Caco-2 (cell line): ENCODE measurements at regions of chr17 and their contacts with region 1.

Region 1: GRCh38 chr17:17079751-17080150 is 37.5 kb downstream of the MPRIP start:
- DNase-seq: no peak
- H3K4me3 ChIP-seq: no peak overlapping the region
- H3K4me3 Mint-ChIP-seq: no peak overlapping the region
- H3K27ac Mint-ChIP-seq: peak overlapping the region; percentile 74
- H3K4me1 ChIP-seq: peaks cover 40% of the 10 kb centered on the region
- H3K4me1 Mint-ChIP-seq: peaks cover 48% of the 10 kb centered on the region
- H3K27me3 ChIP-seq: no peaks in the 10 kb centered on the region
- H3K27me3 Mint-ChIP-seq: no peaks in the 10 kb centered on the region
- CTCF ChIP-seq: no peak

Region 2: DNA sequence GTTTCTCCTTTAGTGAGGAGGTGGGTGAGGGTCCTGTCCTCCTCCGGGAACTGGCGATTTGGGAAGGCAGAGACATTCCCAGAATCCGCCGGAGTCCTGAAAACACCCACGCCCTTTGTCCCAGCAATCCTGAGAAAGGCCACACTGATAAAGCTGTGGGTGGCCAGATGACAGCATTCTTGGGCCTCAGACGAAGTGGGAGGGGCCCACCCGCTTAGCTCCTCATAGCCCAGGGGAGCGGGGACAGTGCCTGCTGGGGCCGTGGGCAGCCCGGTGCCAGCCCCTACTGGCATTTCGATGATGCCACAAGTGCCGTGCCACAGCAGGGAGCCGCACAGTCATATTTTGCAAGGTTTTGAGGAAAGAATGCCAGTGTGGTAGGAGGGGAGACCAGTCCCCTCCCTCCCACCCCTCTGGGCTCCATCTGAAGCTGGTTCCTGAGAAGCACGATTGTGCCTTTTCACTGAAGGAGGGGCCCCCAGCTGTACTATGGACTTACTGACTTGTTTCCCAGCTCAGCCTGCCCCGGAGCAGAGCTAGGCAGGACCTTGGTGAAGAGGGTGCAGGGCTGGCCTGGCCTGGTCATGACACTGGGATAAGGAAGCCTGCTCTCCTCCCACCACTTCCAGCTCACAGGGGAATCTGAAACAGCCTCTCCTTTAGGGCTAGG is 58.4 kb before region 1 on chr17:
- CTCF ChIA-PET with region 1: no interaction called
- POLR2A ChIA-PET with region 1: interaction called, 6 read pairs
- intact Hi-C with region 1: loop called (anchors 1 kb)
- DNase-seq: peak; percentile 85 to 94
- H3K4me3 ChIP-seq: no peak overlapping the region; the same call in 1 of the 2 replicates
- H3K4me3 Mint-ChIP-seq: peak overlapping the region; percentile 51
- H3K27ac Mint-ChIP-seq: peak overlapping the region; percentile 94
- H3K4me1 ChIP-seq: peaks cover 57% of the 10 kb centered on the region
- H3K4me1 Mint-ChIP-seq: peaks cover 60% of the 10 kb centered on the region
- H3K27me3 ChIP-seq: no peaks in the 10 kb centered on the region
- H3K27me3 Mint-ChIP-seq: no peaks in the 10 kb centered on the region
- CTCF ChIP-seq: no peak

Region 3: DNA sequence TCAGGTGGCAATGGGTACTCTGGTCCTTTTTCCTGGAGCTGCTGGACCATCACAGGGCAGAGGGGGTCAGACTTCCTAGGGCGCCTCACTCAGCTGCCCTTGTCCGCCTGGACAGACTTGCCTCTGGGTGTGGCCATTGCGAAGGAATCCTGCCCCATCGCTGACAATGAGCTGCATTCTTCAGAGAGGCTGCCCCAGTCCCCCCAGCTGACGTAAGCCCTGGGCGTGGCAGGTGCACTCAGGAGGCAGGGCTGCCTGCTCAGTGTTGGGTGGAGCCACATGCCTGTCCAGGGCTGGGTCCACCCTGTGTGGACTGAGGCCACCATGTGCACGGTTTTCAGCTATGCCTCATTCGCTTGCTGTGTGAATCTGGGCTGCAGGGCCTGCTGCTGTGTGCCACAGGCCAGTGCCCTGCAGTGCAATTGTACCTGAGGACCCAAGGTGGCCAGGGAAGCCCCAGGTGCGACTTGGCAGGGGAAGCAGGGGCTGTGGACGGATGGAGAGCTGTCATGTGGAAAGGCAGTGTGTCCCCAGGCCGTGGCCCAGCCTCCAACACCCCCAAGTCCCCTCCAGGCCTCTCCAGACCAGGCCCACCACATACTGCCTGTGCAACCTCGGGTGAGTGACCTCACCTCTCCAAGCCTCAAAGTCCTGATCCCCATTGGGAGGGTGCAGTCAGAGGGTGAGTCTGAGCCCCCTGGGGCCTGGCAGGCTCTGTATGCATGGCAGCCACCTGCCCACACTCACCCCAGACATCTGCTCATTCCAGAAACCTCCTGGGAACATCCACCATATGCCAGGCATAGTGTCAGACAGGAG is 51.5 kb before region 1 on chr17:
- CTCF ChIA-PET with region 1: interaction called, 13 read pairs
- POLR2A ChIA-PET with region 1: interaction called, 6 read pairs
- intact Hi-C with region 1: loop called (anchors 1 kb)
- DNase-seq: peak; percentile 99 to 100
- H3K4me3 ChIP-seq: peak overlapping the region; percentile 24
- H3K4me3 Mint-ChIP-seq: peak overlapping the region; percentile 69
- H3K27ac Mint-ChIP-seq: peak overlapping the region; percentile 99
- H3K4me1 ChIP-seq: peaks cover 49% of the 10 kb centered on the region
- H3K4me1 Mint-ChIP-seq: peaks cover 53% of the 10 kb centered on the region
- H3K27me3 ChIP-seq: no peaks in the 10 kb centered on the region
- H3K27me3 Mint-ChIP-seq: no peaks in the 10 kb centered on the region
- CTCF ChIP-seq: peak in 1 of 2 experiments; percentile 46

Region 4: GRCh38 chr17:17055286-17056155 is 24.2 kb before region 1 on chr17:
- CTCF ChIA-PET with region 1: no interaction called
- POLR2A ChIA-PET with region 1: no interaction called
- intact Hi-C with region 1: loop called (anchors 1 kb)
- DNase-seq: peak in 1 of 2 experiments; percentile 30
- H3K4me3 ChIP-seq: no peak overlapping the region
- H3K4me3 Mint-ChIP-seq: no peak overlapping the region
- H3K27ac Mint-ChIP-seq: no peak overlapping the region
- H3K4me1 ChIP-seq: peaks cover 16% of the 10 kb centered on the region; the same call in 1 of the 2 replicates
- H3K4me1 Mint-ChIP-seq: peaks cover 15% of the 10 kb centered on the region
- H3K27me3 ChIP-seq: no peaks in the 10 kb centered on the region
- H3K27me3 Mint-ChIP-seq: no peaks in the 10 kb centered on the region
- CTCF ChIP-seq: peak in 1 of 2 experiments; percentile 1

Region 5: GRCh38 chr17:17063546-17064122 is 16.1 kb before region 1 on chr17:
- CTCF ChIA-PET with region 1: no interaction called
- POLR2A ChIA-PET with region 1: interaction called, 3 read pairs
- intact Hi-C with region 1: loop called (anchors 1 kb)
- DNase-seq: no peak
- H3K4me3 ChIP-seq: no peak overlapping the region
- H3K4me3 Mint-ChIP-seq: no peak overlapping the region
- H3K27ac Mint-ChIP-seq: peak overlapping the region; percentile 51
- H3K4me1 ChIP-seq: peaks cover 19% of the 10 kb centered on the region
- H3K4me1 Mint-ChIP-seq: peaks cover 24% of the 10 kb centered on the region
- H3K27me3 ChIP-seq: no peaks in the 10 kb centered on the region
- H3K27me3 Mint-ChIP-seq: no peaks in the 10 kb centered on the region
- CTCF ChIP-seq: no peak

Region 6: DNA sequence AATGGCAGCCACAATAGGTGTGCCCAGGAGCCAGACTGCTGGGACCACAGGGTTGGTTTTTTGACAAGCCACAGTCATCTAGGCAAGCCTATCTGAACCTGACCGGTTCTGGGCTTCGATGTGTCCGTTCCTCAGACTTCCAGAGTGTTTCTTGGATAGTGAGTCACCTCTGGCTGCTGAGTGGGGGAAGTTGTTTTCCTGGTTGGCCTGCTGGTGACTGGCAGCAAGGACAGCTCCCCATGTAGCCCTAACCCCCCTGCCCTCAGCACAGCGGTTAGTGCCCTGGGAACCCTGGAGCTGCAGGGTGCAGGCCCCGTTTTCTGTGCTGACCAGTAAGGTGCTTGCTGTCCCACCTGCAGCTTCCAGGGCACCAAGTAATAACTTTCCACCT is 60.8 kb after region 1 on chr17:
- CTCF ChIA-PET with region 1: no interaction called
- POLR2A ChIA-PET with region 1: no interaction called
- intact Hi-C with region 1: no loop called
- DNase-seq: no peak
- H3K4me3 ChIP-seq: no peak overlapping the region
- H3K4me3 Mint-ChIP-seq: no peak overlapping the region
- H3K27ac Mint-ChIP-seq: no peak overlapping the region
- H3K4me1 ChIP-seq: no peaks in the 10 kb centered on the region
- H3K4me1 Mint-ChIP-seq: no peaks in the 10 kb centered on the region
- H3K27me3 ChIP-seq: no peaks in the 10 kb centered on the region
- H3K27me3 Mint-ChIP-seq: no peaks in the 10 kb centered on the region
- CTCF ChIP-seq: no peak